ENCODE measurements at regions of chr17 and their contacts with region 1.

Region 1: DNA sequence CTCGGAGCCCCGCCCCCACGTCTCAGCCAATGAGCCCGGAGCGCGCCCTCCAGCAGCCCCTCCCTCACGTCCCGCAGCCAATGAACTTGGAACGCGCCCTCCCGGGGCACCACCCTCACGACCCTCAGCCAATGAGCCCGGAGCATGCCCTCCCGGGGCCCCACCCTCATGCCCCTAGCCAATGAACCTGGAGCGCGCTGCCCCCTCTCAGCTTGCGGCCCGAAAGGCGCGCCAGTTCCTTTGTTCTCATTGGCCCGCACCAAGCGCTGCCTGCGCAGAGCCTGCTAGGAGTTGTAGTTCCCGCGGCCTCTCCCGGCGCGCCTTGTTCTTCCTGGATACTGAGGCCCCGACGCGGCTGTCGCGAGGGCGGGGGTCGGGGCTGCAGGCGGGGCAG is at the start of gene LRRC45:
- DNase-seq: peak; percentile 91
- ATAC-seq: peak; percentile 88
- H3K4me3 ChIP-seq: peak within 1 kb of the TSS; percentile 65 to 84
- H3K27ac ChIP-seq: peak within 1 kb of the TSS; percentile 74
- H3K4me1 ChIP-seq: peaks cover 33% of the 10 kb centered on the region
- H3K27me3 ChIP-seq: no peaks in the 10 kb centered on the region
- CTCF ChIP-seq: no peak
- total RNA-seq, gene LRRC45: 29.9 TPM

Region 2: GRCh38 chr17:81860756-81861518 is 162.0 kb before region 1 on chr17:
- CTCF ChIA-PET with region 1: no interaction called
- POLR2A ChIA-PET with region 1: no interaction called
- in situ Hi-C with region 1: no loop called
- intact Hi-C with region 1: loop called (anchors 10 kb)
- DNase-seq: peak; percentile 99
- ATAC-seq: peak; percentile 94
- H3K4me3 ChIP-seq: peak overlapping the region; percentile 83 to 99
- H3K27ac ChIP-seq: peak overlapping the region; percentile 95
- H3K4me1 ChIP-seq: peaks cover 32% of the 10 kb centered on the region
- H3K27me3 ChIP-seq: no peaks in the 10 kb centered on the region
- CTCF ChIP-seq: no peak

Region 3: GRCh38 chr17:81884520-81884919 is 138.5 kb before region 1 on chr17:
- CTCF ChIA-PET with region 1: no interaction called
- POLR2A ChIA-PET with region 1: interaction called, 13 read pairs
- in situ Hi-C with region 1: no loop called
- intact Hi-C with region 1: no loop called
- DNase-seq: no peak
- ATAC-seq: peak; percentile 40
- H3K4me3 ChIP-seq: no peak overlapping the region
- H3K27ac ChIP-seq: no peak overlapping the region
- H3K4me1 ChIP-seq: peaks cover under 1% of the 10 kb centered on the region; the same call in 1 of the 2 replicates
- H3K27me3 ChIP-seq: no peaks in the 10 kb centered on the region
- CTCF ChIP-seq: no peak

Region 4: GRCh38 chr17:81890447-81891299 is 132.3 kb before region 1 on chr17:
- CTCF ChIA-PET with region 1: interaction called, 17 read pairs
- POLR2A ChIA-PET with region 1: no interaction called
- in situ Hi-C with region 1: no loop called
- intact Hi-C with region 1: no loop called
- DNase-seq: no peak
- ATAC-seq: no peak; the same call in 1 of the 2 replicates
- H3K4me3 ChIP-seq: peak overlapping the region; percentile 85 to 95
- H3K27ac ChIP-seq: peak overlapping the region; percentile 90
- H3K4me1 ChIP-seq: peaks cover 9% of the 10 kb centered on the region
- H3K27me3 ChIP-seq: no peaks in the 10 kb centered on the region
- CTCF ChIP-seq: no peak

Region 5: DNA sequence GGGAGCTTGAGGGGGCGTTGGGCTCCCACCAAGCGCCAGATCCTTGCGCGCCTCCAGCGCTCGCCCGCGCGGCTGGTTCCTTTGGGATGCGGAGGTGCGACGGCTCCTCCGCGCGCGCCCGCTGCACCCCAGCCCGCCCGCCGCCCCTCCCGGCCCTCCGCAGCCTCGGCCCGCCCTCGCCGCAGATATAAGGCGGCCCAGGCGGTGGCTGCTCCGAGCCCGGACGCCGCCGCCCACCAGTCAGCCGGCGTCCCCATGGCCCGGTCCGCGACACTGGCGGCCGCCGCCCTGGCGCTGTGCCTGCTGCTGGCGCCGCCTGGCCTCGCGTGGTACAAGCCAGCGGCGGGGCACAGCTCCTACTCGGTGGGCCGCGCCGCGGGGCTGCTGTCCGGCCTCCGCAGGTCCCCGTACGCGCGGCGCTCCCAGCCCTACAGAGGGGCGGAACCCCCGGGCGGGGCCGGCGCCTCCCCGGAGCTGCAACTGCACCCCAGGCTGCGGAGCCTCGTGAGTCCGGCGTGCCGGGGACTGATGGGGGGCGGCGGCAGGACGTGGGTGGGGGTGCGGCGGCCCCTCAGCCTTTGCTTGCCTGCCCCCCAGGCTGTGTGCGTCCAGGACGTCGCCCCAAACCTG is 120.8 kb before region 1 on chr17 and contains the start of gene NPB:
- CTCF ChIA-PET with region 1: interaction called, 17 read pairs
- POLR2A ChIA-PET with region 1: no interaction called
- in situ Hi-C with region 1: no loop called
- intact Hi-C with region 1: no loop called
- DNase-seq: no peak
- ATAC-seq: peak; percentile 6; the same call in 1 of the 2 replicates
- H3K4me3 ChIP-seq: peak within 1 kb of the TSS in 1 of 2 experiments; percentile 13; a peak in 1 of 4 replicates
- H3K27ac ChIP-seq: no peak within 1 kb of the TSS
- H3K4me1 ChIP-seq: peaks cover 27% of the 10 kb centered on the region
- H3K27me3 ChIP-seq: no peaks in the 10 kb centered on the region
- CTCF ChIP-seq: no peak
- total RNA-seq, gene NPB: 3.9 TPM

Region 6: DNA sequence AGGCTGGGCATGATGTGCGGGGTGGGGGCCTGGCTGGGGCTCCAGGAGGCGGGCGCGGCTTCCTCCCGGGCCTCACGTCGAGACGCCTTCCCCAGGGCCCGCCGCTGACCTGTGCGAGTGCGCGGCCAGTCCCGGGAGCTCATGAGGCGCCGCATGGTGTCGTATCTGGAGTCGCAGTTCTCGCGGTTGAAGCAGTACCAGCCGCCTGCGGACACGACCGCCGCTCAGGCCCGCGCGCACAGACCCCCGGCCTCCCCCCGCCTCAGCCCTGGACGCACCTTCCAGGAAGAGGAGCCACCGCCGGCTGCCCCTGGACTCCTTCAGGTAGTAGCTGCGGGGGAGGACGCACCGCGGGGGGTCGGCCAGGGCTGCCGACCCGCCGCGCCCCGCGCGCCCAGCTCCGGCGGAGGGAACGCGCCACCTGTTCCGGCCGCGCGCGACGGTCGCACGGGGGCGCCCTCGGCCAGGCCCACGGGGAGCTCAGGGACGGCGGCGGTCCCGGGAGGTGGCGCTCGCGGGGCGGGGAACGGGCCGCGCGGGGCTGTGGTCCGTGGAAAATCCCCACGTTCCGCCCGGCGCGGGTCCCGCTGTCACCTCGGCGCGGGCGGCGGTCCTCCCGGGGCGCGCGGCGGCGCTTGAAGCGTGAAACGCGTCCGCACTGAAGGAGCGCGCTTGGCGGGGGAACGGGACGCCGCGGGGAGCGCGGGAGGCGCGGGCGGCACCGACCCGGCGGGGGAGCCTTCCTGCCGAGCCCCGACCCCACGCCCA is 63.4 kb before region 1 on chr17:
- CTCF ChIA-PET with region 1: interaction called, 37 read pairs
- POLR2A ChIA-PET with region 1: no interaction called
- in situ Hi-C with region 1: no loop called
- intact Hi-C with region 1: loop called (anchors 2 kb)
- DNase-seq: no peak
- ATAC-seq: peak; percentile 87
- H3K4me3 ChIP-seq: peak overlapping the region; percentile 48 to 51
- H3K27ac ChIP-seq: peak overlapping the region; percentile 54; the same call in 1 of the 2 replicates
- H3K4me1 ChIP-seq: peaks cover 6% of the 10 kb centered on the region
- H3K27me3 ChIP-seq: no peaks in the 10 kb centered on the region; the same call in 1 of the 2 replicates
- CTCF ChIP-seq: peak; percentile 100

Region 7: DNA sequence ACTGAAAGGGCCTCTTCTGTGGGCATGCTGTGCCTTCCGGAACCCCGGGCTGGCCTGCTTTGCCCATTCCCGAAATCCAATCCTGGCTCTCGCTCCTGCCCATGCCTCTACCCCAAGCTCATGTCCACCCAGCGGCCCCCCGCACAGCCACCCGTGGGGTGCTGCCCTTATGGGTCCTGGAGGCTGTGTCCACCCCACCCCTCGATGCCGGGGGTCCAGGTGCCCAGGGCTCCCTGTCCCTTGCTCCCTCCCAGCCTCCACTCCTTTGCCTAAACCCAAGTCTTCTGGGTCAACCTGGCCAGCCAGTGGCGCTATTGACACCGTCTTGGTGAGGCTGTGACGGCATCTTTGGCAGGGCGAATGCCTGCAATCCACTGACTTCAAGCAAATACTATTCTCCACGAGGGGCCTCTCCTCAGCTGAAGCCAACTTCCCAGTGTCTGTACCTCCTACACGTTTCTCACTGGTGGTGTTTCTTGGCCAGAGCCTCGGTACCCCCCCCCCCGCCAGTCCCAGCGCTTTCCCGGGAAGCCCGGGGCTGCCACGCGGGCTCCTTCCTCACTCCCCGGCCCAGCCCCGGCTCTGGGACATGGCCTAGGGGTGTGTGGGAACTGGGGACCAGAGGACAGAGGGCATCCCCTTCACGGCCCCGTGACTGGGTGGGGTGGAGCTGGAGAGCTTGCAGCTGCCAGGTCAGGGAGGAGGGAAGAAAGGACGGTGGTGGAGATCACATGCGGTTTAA is 54.8 kb after region 1 on chr17:
- CTCF ChIA-PET with region 1: no interaction called
- POLR2A ChIA-PET with region 1: no interaction called
- in situ Hi-C with region 1: no loop called
- intact Hi-C with region 1: no loop called
- DNase-seq: no peak
- ATAC-seq: peak; percentile 52
- H3K4me3 ChIP-seq: no peak overlapping the region
- H3K27ac ChIP-seq: peak overlapping the region; percentile 41; the same call in 1 of the 2 replicates
- H3K4me1 ChIP-seq: peaks cover 25% of the 10 kb centered on the region
- H3K27me3 ChIP-seq: no peaks in the 10 kb centered on the region
- CTCF ChIP-seq: no peak